Head of caudate nucleus (tissue), 42 donors: ENCODE measurements at regions of chr7 and their contacts with region 1.

Region 1: DNA sequence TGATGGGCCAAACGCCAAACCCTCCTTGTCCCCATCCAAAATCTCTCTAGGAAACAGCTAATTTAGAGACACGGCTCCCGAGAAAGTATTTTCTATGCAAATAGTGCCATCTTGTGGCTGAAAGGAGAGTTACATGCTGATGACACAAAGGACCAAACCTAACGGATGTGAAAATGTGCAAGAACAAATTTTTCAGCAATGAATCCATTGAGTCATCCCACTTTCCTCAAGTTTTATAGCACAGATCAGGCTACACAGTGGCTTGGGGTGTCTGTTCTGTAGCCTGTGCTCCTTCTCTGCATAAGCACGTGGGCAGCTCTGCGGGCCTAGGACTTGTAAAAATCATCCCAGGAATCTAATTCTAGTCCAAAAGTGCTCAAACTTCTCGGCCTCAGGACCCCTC is 154.8 kb upstream of the PRR15 start:
- DNase-seq: peak in 34 of 42 donors; percentile 20 to 92 (median 66)

Region 2: DNA sequence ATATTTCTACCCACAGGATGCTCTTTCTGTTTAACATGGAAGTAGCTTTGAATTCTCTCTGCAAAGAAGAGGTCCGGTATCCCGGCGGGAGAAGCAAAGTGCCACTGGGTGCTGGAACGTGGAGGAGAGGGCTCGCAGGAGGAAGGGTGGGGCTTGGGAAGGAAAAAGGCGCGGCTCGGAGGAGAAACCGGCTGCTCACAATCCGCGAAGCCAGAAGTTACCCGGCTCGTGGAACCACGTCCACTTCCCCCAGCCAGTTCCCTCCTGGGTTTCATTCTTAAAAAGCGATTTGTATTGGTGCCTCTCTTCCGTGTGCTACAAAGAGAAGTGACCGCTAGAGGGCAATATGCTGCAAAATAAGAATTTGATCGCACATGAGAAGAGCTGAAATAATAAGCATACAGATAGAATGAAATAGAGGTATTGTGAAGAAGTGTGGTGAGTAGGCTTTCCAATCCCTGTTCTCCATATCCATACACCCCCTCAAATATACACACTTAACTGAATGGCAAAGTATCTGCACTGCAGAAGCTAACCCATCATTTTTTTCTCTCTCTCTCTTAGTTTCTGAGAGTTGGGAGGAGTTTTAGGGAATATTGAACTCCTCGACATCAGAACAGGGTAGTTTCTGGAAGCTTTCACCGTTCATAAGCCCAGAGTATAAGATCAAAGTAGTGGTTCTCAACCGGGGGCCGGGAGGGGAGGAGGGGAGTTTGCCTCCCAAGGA is 481.8 kb before region 1 on chr7:
- intact Hi-C with region 1: loop called (anchors 5 kb)
- DNase-seq: peak; percentile 8 to 87 (median 60)

Region 3: DNA sequence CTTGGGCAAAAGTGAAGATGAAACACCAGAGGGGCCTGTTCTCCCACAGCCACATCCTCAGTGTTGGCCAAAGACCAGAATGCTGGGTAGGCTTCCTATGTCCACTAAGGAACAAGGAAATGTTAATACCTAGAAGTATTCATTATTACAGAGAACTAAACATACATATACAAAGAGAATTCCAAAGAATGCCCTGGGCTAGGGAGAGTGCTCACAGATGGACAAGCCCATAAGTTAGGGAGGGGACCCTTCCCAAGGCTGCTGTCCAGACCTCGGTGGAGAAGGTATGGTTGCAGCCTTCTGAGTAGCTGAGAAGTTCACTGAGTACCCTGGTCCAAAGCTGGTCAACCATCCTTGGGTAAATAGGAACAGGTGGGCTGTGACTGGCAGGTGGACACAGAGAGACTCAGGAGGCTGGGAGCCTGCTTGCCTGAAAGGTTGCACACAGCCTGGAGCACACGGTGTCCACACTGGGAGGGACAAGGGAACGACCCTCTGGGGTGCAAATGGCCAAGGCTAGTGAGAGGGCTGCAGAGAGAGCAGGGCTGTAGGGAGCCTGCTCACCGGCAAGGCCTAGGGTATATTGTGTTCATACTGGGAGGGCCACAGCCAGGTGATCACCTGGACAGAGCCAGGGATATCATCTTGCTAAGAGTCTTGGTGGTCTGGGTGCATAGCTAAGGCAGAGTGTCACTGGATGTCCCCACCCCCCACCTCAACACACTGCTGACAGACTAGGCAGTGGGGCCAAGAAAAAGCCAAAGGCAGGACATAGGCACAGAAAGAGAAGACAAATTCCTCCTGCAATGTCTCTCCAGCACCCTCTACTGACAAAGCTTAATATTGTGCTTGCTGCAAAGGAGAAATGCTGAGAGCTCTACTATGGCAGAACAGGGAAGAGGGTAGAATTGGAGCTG is 302.8 kb before region 1 on chr7:
- intact Hi-C with region 1: loop called (anchors 10 kb)
- DNase-seq: peak in 27 of 42 donors; percentile 12 to 79 (median 55)

Region 4: GRCh38 chr7:29189743-29190201 is 219.1 kb before region 1 on chr7:
- intact Hi-C with region 1: loop called (anchors 10 kb)
- DNase-seq: peak; percentile 66 to 91 (median 81)

Region 5: DNA sequence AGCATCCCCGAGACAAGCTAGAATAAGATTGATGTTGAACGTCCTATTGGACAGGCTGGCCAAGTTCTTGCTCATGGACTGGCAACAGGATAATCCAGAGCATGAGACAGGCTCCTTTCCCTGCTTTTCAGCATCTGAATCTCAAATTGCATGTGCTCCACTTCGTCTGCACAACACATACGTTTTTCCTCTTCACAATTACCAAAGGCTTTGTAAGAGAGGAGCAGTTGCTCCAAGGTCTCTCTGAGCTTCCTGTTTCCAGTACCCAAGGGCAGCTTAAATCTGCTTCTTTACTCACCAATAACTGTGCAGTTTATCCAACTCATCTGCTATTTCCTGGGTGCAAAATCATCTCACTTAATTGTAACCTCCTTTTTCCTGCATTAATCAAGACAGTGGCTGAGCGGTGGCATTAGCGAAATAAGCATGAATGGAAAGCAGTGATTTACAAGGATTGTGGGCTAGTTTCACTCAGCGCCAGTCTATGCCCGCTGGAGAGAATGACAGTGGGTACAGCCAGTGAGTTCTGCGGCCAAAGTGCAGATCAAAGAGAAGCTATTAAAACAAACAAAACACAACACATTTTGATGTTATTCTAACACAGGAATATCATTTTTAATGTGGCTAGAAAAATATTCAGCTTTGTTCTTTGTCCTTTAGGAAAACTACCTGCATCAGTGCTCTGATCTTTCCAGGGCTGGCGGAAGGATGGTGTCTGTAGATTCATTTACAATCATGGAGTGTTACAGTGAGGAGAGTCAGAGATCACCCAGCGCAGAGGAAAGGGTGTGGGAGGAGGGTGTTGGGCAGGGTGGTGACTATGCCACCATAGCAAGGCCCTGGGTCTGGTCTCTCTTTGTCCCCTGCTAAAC is 134.5 kb before region 1 on chr7:
- intact Hi-C with region 1: no loop called
- DNase-seq: peak in 34 of 42 donors; percentile 22 to 77 (median 45)

Region 6: DNA sequence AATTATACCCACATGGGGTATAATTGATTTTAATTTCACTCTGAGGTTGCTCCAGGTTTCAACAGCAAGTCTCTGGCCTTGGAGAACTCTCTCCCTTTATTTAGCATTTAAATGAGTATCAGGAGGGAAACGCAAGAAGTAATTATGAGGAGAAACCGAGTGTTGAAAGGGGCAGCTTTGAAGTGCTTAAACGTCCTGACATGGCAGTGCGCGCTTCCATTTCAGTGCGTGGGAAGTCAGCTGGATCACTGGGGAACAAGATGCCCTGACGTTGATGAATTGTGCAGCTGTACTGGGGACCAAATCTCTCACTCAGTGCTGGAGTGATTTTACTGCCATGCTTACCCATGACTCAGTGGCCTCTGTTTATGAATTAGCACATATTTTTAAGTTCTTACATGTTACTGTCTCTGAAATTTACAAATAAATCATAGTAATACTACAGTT is 48.7 kb after region 1 on chr7:
- intact Hi-C with region 1: no loop called
- DNase-seq: peak in 38 of 42 donors; percentile 7 to 77 (median 40)